CD8-positive, alpha-beta memory T cell (primary cell): ENCODE measurements at regions of chr1 and their contacts with region 1.

Region 1: GRCh38 chr1:206612129-206612876 is at the start of gene EIF2D:
- DNase-seq: peak; percentile 91 to 95 (median 92)
- H3K4me3 ChIP-seq: peak within 1 kb of the TSS; percentile 98
- H3K4me3 Mint-ChIP-seq: peak within 1 kb of the TSS; percentile 88 to 95 (median 92)
- H3K27ac ChIP-seq: peak within 1 kb of the TSS; percentile 91
- H3K27ac Mint-ChIP-seq: peak within 1 kb of the TSS; percentile 63 to 97 (median 96)
- H3K4me1 ChIP-seq: peaks cover 9% of the 10 kb centered on the region
- H3K4me1 Mint-ChIP-seq: peaks cover 14 to 26% (median 21%) of the 10 kb centered on the region in 3 donors
- H3K27me3 ChIP-seq: no peaks in the 10 kb centered on the region
- H3K27me3 Mint-ChIP-seq: no peaks in the 10 kb centered on the region
- total RNA-seq, gene EIF2D: 82.7 to 88.7 TPM

Region 2: DNA sequence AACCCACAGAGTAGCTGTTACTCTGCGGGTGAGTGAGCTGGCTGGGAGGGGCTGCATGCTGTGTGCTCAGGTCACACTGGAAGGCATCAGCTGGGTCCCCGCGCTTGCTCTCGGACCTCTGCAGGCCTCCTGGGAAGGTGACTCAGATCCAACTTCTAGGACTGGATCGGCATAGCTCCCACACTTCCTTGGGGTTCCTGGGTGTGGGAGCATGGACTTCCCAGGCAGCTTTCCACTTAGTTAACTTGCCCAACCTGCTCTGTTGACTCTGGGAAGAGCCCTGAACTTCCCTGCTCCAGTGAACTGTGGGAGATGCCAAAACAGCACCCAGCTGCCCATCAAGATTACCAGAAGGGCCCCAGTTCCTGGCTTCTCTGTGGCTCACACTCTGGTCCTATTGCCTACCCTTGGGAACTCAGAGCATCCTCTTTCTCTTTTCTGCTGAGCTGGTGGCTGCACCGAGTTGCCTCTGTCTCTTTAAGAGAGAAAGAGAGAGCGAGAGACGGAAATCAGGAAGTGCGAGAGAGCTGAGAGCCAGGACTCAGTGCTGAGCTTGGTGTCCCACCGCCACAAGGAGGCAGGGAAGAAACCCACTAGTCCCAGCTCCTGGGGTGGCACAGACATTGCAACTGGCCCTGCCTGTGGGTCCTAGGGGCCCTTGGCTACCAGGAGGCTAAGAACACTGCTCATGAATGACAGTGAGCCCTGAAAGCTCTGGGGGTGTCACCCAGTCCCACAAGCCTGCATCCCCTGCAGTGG is 142.2 kb before region 1 on chr1 and contains the start of gene IKBKE:
- CTCF ChIA-PET with region 1: interaction called, 14 read pairs
- POLR2A ChIA-PET with region 1: interaction called, 11 read pairs
- DNase-seq: peak; percentile 27 to 70 (median 39)
- H3K4me3 ChIP-seq: peak within 1 kb of the TSS; percentile 96
- H3K4me3 Mint-ChIP-seq: peak within 1 kb of the TSS; percentile 89 to 97 (median 93)
- H3K27ac ChIP-seq: peak within 1 kb of the TSS; percentile 76
- H3K27ac Mint-ChIP-seq: peak within 1 kb of the TSS; percentile 77 to 97 (median 92)
- H3K4me1 ChIP-seq: peaks cover 74% of the 10 kb centered on the region
- H3K4me1 Mint-ChIP-seq: peaks cover 72 to 89% (median 78%) of the 10 kb centered on the region in 3 donors
- H3K27me3 ChIP-seq: no peaks in the 10 kb centered on the region
- H3K27me3 Mint-ChIP-seq: no peaks in the 10 kb centered on the region
- total RNA-seq, gene IKBKE: 17.1 to 18.4 TPM

Region 3: DNA sequence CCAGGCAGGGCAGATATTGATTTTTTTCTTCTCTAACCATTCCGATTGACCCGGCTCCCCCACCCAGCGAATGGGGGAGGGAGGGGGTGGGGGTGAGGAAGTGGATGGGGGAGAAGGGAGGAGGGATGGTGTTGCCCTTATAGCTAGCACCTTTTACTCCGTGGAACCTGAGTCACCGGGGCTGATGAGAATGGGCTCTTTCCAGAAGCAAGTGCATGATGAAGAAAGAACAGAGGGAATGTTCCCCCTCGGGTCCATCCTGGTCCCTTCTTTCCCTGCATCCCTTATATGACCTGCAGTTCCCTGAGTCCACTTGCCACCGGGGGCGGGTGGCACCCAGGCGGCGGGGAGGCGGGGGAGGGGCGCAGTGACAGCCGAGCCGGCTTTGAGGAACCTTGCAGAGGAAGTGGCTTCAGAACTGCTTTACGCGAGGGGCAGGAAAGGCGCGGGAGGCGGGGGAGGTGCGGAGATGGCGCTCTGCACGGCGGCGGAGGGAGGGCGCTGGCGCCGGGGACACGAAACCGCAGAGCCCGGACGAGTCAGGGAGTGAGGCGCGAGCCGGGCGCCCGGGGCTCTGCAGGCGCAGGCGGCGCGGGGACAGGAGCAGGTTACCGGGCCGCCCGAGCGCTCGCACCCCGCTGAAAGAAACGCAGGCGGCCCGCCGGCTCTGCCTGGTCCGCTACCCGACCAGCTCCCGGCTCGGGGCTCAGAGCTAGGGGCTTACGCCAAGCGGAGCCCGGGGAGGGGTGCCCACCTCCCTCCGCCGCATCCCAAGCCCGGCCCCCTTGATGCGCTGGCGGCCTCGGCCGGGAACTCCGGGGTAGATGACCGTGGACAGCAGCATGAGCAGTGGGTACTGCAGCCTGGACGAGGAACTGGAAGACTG is 55.3 kb before region 1 on chr1:
- CTCF ChIA-PET with region 1: interaction called, 13 read pairs
- POLR2A ChIA-PET with region 1: interaction called, 4 read pairs
- DNase-seq: peak; percentile 84 to 91 (median 91)
- H3K4me3 ChIP-seq: peak overlapping the region; percentile 99
- H3K4me3 Mint-ChIP-seq: peak overlapping the region; percentile 96 to 100 (median 98)
- H3K27ac ChIP-seq: peak overlapping the region; percentile 92
- H3K27ac Mint-ChIP-seq: peak overlapping the region; percentile 87 to 99 (median 97)
- H3K4me1 ChIP-seq: peaks cover 71% of the 10 kb centered on the region
- H3K4me1 Mint-ChIP-seq: peaks cover 72 to 80% (median 76%) of the 10 kb centered on the region in 3 donors
- H3K27me3 ChIP-seq: no peaks in the 10 kb centered on the region
- H3K27me3 Mint-ChIP-seq: peaks cover 0 to 3% of the 10 kb centered on the region in 2 donors

Region 4: GRCh38 chr1:206600527-206600926 is 11.8 kb before region 1 on chr1:
- CTCF ChIA-PET with region 1: interaction called, 11 read pairs
- POLR2A ChIA-PET with region 1: no interaction called
- DNase-seq: no peak
- H3K4me3 ChIP-seq: no peak overlapping the region
- H3K4me3 Mint-ChIP-seq: no peak overlapping the region
- H3K27ac ChIP-seq: no peak overlapping the region
- H3K27ac Mint-ChIP-seq: no peak overlapping the region
- H3K4me1 ChIP-seq: no peaks in the 10 kb centered on the region
- H3K4me1 Mint-ChIP-seq: no peaks in the 10 kb centered on the region
- H3K27me3 ChIP-seq: no peaks in the 10 kb centered on the region
- H3K27me3 Mint-ChIP-seq: no peaks in the 10 kb centered on the region

Region 5: DNA sequence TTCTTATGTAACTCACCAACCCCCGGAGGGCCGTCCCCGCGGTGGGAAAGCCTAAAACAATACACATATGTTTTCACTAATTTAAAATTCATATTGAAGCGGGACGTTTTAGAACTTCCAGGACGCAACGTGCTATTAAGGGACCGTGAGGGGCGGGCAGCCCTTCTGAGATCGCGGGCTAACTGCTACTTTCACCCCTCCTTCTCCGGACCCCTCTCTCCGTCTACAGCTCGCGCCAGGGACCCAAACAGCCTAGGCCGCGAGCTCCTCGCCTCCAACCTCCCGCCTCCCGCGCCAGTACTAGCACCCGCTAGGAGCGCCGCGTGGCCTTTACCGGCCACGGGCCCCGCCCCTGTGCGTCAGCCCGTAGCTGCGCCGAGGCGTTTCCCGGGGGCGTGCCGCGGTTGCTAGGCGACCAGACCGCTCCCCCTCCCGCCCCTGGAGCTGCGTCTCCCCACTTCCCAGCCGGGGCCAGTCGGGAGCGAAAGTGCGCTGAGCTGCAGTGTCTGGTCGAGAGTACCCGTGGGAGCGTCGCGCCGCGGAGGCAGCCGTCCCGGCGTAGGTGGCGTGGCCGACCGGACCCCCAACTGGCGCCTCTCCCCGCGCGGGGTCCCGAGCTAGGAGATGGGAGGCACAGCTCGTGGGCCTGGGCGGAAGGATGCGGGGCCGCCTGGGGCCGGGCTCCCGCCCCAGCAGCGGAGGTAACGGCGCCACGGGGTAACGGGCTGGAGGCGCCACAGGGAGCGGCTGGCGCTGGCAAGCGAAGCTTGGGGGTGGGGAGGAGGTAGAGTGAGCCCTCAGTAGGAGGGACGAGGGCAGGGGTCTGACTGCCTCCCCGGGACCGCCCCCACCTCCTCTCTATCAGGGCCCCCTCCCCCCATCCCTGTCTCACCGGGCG is 23.0 kb after region 1 on chr1 and contains the start of gene DYRK3:
- CTCF ChIA-PET with region 1: interaction called, 16 read pairs
- POLR2A ChIA-PET with region 1: interaction called, 7 read pairs
- DNase-seq: peak; percentile 84 to 94 (median 87)
- H3K4me3 ChIP-seq: peak within 1 kb of the TSS; percentile 62
- H3K4me3 Mint-ChIP-seq: peak within 1 kb of the TSS; percentile 85 to 96 (median 89)
- H3K27ac ChIP-seq: peak within 1 kb of the TSS; percentile 59
- H3K27ac Mint-ChIP-seq: peak within 1 kb of the TSS; percentile 61 to 95 (median 90)
- H3K4me1 ChIP-seq: peaks cover 13% of the 10 kb centered on the region
- H3K4me1 Mint-ChIP-seq: peaks cover 13 to 27% (median 18%) of the 10 kb centered on the region in 3 donors
- H3K27me3 ChIP-seq: no peaks in the 10 kb centered on the region
- H3K27me3 Mint-ChIP-seq: peaks cover 10 to 13% of the 10 kb centered on the region in 2 donors
- total RNA-seq, gene DYRK3: 11.0 to 11.7 TPM